ENCODE measurements at regions of chr13 and their contacts with region 1.

Region 1: DNA sequence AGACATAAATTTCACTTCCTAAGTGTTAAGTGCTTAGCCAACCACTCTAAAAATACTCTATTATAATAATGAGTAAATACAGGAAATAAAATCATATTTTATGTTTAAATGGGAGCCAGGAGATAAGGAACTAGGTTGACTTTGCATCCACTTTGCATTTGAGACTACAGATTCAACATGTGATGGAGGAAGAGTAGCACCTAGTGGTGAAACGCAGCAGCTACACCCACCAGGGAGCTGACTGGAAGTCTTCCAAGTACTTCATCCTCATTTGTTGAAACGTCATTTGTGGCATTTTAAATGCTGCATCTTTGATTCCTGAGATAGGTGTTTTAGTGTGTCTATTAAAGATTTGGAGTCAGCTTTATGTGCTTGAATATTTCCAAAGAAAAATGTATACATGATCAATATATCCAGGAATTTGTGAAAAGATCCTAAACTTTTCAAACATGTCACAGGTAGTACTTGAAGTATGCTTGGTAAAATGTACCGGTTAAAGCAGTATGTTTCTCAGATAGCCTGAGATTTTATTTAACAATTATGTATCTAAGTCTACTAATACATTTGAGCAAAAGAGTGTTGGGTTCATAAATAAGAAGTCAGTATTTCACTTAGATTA is 17.4 kb upstream of the KCTD12 start:
- DNase-seq: peak; percentile 85

Region 2: GRCh38 chr13:75876360-75877050 is 1027.1 kb before region 1 on chr13:
- intact Hi-C with region 1: loop called in 1 of 2 experiments (anchors 10 kb)
- DNase-seq: no peak

Region 3: GRCh38 chr13:76667551-76667950 is 236.1 kb before region 1 on chr13:
- intact Hi-C with region 1: loop called (anchors 10 kb)
- DNase-seq: no peak